Ovary (tissue), 10 donors: ENCODE measurements at regions of chr13 and their contacts with region 1.

Region 1: DNA sequence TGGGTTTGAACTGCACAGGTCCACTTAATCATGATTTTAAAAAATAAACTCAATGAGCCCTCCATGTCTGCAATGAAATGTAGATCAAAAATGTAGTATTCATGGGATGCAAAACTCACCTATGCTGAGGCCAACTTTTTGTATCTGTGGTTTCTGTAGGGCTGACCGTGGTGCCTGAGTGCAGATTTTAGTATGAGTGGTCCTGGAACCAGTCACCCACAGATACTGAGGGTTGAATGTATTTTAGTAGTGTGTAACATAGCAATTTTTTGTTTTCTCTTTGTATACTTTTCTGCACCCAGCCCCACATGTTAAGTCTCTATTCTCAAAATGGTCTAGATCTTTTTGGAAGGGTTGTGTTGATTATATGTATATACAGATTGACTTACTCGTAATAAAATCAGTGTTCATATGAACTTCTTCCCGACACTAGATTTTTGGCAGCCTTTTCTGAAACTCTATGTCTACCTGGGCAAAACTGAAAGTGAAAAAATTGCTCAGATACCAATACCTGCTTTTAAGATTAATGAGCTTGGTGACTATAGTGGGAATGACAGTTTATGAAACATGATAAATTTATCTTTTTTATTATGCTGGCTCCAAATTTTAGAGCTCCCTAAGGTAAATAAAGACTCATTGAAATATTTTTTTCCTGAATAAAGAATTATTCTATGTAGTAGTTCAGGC is 51.6 kb downstream of the DNAJC15 start:
- DNase-seq: no peak
- H3K4me3 ChIP-seq: no peak overlapping the region
- H3K27ac ChIP-seq: no peak overlapping the region
- H3K4me1 ChIP-seq: peaks cover 1% of the 10 kb centered on the region
- H3K27me3 ChIP-seq: no peaks in the 10 kb centered on the region
- CTCF ChIP-seq: no peak
- EP300 ChIP-seq: no peak
- POLR2A ChIP-seq: no peak

Region 2: DNA sequence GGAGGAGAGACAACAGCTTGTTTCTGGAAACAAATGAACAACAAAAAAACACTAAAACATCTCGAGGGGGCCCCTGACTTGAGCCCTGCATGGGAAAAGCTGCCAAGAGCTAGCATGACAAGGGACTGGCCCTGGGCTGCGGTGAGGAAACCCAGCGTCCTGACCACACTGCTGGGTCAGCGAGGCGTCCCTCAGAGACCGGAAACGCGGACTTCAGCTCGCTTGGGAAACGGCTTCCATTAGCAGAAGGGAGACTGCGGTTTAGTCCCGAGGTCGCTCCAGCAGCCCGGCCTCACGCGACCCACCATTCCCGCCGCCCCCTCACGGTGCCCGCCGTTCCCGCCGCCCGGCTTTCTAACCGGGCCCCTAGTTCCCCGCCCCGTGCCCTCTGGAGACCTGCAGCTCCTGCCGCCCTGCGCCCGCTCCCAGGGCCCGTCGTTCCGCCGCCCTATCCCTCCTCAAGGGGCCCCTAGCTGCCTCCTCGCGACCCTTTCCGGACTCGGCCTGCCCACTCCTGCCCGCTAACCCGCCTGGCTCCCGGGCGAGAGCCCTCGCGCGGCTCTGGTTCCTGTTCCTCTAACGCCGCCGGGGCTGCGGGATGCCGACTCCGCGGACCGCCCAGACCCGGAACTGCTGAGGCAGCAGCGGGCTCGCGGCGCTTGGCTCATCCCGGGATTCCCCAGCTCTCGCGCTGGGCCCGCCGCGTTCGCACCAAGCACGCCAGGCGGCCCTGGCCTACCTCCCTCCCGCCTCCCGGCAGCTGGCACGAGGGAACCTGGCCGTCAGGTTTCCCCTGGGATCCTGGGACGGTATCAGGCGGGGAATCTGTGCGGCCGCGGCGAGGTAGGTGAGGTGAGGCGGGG is 804.2 kb after region 1 on chr13 and contains the start of gene CCDC122:
- intact Hi-C with region 1: loop called in 2 of 4 experiments (anchors 10 kb)
- DNase-seq: peak; percentile 75 to 89 (median 77)
- H3K4me3 ChIP-seq: peak within 1 kb of the TSS; percentile 70
- H3K27ac ChIP-seq: peak within 1 kb of the TSS; percentile 80 to 90
- H3K4me1 ChIP-seq: peaks cover 1% of the 10 kb centered on the region
- H3K27me3 ChIP-seq: no peaks in the 10 kb centered on the region
- CTCF ChIP-seq: peak in 1 of 3 donors; percentile 7
- EP300 ChIP-seq: no peak
- POLR2A ChIP-seq: peak; percentile 17
- total RNA-seq, gene CCDC122: 4.2 to 15.2 (median 6.6) TPM